T-cell (primary cell): ENCODE measurements at regions of chr4 and their contacts with region 1.

Region 1: GRCh38 chr4:142558851-142559250 is 287.2 kb downstream of the INPP4B start:
- DNase-seq: no peak
- ATAC-seq: no peak
- H3K4me3 ChIP-seq: no peak overlapping the region
- H3K4me3 Mint-ChIP-seq: peak overlapping the region in 1 of 3 donors; percentile 39
- H3K27ac ChIP-seq: no peak overlapping the region
- H3K27ac Mint-ChIP-seq: peak overlapping the region; percentile 71 to 72
- H3K4me1 ChIP-seq: peaks cover 8 to 13% of the 10 kb centered on the region in 2 experiments
- H3K4me1 Mint-ChIP-seq: peaks cover 66 to 77% (median 69%) of the 10 kb centered on the region in 3 donors
- H3K27me3 ChIP-seq: no peaks in the 10 kb centered on the region
- H3K27me3 Mint-ChIP-seq: no peaks in the 10 kb centered on the region

Region 2: GRCh38 chr4:142088906-142089305 is 469.9 kb before region 1 on chr4:
- CTCF ChIA-PET with region 1: no interaction called
- POLR2A ChIA-PET with region 1: interaction called in 1 of 2 experiments, 10 read pairs
- DNase-seq: no peak
- ATAC-seq: no peak
- H3K4me3 ChIP-seq: no peak overlapping the region
- H3K4me3 Mint-ChIP-seq: no peak overlapping the region
- H3K27ac ChIP-seq: no peak overlapping the region
- H3K27ac Mint-ChIP-seq: peak overlapping the region in 1 of 2 donors; percentile 47
- H3K4me1 ChIP-seq: no peaks in the 10 kb centered on the region
- H3K4me1 Mint-ChIP-seq: peaks cover 3 to 4% (median 4%) of the 10 kb centered on the region in 3 donors
- H3K27me3 ChIP-seq: no peaks in the 10 kb centered on the region
- H3K27me3 Mint-ChIP-seq: no peaks in the 10 kb centered on the region

Region 3: GRCh38 chr4:142683997-142684396 is 125.1 kb after region 1 on chr4:
- CTCF ChIA-PET with region 1: no interaction called
- POLR2A ChIA-PET with region 1: no interaction called
- DNase-seq: no peak
- ATAC-seq: no peak
- H3K4me3 ChIP-seq: no peak overlapping the region
- H3K4me3 Mint-ChIP-seq: no peak overlapping the region
- H3K27ac ChIP-seq: no peak overlapping the region
- H3K27ac Mint-ChIP-seq: no peak overlapping the region
- H3K4me1 ChIP-seq: no peaks in the 10 kb centered on the region
- H3K4me1 Mint-ChIP-seq: peaks cover 9 to 19% (median 13%) of the 10 kb centered on the region in 3 donors
- H3K27me3 ChIP-seq: no peaks in the 10 kb centered on the region
- H3K27me3 Mint-ChIP-seq: no peaks in the 10 kb centered on the region